ENCODE measurements at regions of chr13 and their contacts with region 1.

Region 1: DNA sequence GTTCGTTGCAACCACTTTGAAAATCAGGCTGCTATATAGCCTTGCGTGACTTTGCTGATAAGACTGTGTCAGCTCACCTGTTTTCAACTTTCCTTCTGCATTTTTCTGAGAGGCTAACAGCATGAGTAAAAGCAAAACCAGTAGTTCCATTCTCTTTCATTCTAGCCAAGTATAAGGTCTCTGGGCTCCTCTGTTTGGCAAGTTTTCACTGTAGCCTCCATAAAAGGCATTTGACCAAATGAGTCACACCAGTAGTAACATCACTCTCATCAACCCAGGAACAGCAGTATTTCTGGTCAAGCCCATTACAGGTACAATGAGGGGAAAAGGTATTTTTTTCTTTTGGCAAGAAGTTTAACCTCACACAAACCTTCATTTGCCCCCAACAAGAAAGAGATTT is 1149.8 kb upstream of the MIR17HG start:
- DNase-seq: no peak
- H3K4me3 ChIP-seq: no peak overlapping the region
- H3K4me3 Mint-ChIP-seq: no peak overlapping the region
- H3K27ac Mint-ChIP-seq: no peak overlapping the region
- H3K4me1 ChIP-seq: no peaks in the 10 kb centered on the region
- H3K4me1 Mint-ChIP-seq: no peaks in the 10 kb centered on the region
- H3K27me3 ChIP-seq: no peaks in the 10 kb centered on the region
- H3K27me3 Mint-ChIP-seq: no peaks in the 10 kb centered on the region
- CTCF ChIP-seq: no peak

Region 2: GRCh38 chr13:90070362-90070761 is 127.4 kb before region 1 on chr13:
- CTCF ChIA-PET with region 1: no interaction called
- POLR2A ChIA-PET with region 1: no interaction called
- intact Hi-C with region 1: loop called (anchors 5 kb)
- DNase-seq: no peak
- H3K4me3 ChIP-seq: no peak overlapping the region
- H3K4me3 Mint-ChIP-seq: peak overlapping the region; percentile 39
- H3K27ac Mint-ChIP-seq: peak overlapping the region; percentile 57
- H3K4me1 ChIP-seq: peaks cover 14% of the 10 kb centered on the region; the same call in 1 of the 2 replicates
- H3K4me1 Mint-ChIP-seq: peaks cover 10% of the 10 kb centered on the region
- H3K27me3 ChIP-seq: no peaks in the 10 kb centered on the region
- H3K27me3 Mint-ChIP-seq: no peaks in the 10 kb centered on the region
- CTCF ChIP-seq: no peak

Measured in Caco-2 (cell line).